SK-N-SH (cell line): ENCODE measurements at regions of chr18 and their contacts with region 1.

Region 1: DNA sequence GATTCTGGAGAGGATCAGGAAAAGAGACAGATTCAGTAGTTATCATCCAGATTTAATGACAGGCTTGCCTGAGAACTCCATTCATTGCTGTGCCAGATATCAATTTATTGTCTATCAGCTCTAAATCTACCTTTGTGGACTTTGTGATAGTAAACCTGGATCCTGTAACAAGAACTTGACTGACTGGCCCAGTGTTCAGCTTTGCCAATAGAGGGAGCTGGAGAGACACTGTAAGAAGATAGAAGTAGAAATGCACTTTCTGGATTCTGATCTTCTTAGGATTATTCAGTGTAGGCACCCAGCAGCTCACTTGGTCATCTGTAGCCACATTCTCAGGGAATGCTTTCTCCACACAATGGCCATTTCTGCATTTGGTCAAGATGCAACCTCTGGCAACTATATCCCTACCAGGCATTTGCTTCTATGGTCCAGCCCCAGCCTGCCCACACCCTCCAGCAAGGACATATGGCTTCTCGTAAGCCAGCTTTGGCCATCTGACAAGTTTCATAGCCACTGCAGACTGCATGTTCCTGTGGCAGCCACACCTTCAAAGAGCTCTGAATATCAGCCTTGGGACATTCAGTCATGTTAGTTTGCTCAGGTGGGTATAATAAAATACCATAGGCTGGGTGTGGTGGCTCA is 6.1 kb upstream of the SERPINB8 start:
- DNase-seq: peak; percentile 15
- H3K4me3 ChIP-seq: no peak overlapping the region
- H3K27ac ChIP-seq: no peak overlapping the region
- H3K4me1 ChIP-seq: no peaks in the 10 kb centered on the region
- H3K27me3 ChIP-seq: peaks cover 12% of the 10 kb centered on the region; the same call in 1 of the 2 replicates
- CTCF ChIP-seq: peak; percentile 84
- EP300 ChIP-seq: no peak
- RAD21 ChIP-seq: peak; percentile 70

Region 2: GRCh38 chr18:63949068-63949737 is 14.5 kb before region 1 on chr18 and contains the start of gene HMSD:
- CTCF ChIA-PET with region 1: interaction called, 13 read pairs
- POLR2A ChIA-PET with region 1: no interaction called
- DNase-seq: peak; percentile 56
- H3K4me3 ChIP-seq: no peak within 1 kb of the TSS
- H3K27ac ChIP-seq: no peak within 1 kb of the TSS
- H3K4me1 ChIP-seq: no peaks in the 10 kb centered on the region; a peak in 1 of 4 replicates
- H3K27me3 ChIP-seq: peaks cover 2% of the 10 kb centered on the region; the same call in 1 of the 2 replicates
- CTCF ChIP-seq: peak; percentile 17; the same call in 1 of the 2 replicates
- EP300 ChIP-seq: no peak
- RAD21 ChIP-seq: no peak
- polyA plus RNA-seq, gene HMSD: not detected in 2 replicates

Region 3: DNA sequence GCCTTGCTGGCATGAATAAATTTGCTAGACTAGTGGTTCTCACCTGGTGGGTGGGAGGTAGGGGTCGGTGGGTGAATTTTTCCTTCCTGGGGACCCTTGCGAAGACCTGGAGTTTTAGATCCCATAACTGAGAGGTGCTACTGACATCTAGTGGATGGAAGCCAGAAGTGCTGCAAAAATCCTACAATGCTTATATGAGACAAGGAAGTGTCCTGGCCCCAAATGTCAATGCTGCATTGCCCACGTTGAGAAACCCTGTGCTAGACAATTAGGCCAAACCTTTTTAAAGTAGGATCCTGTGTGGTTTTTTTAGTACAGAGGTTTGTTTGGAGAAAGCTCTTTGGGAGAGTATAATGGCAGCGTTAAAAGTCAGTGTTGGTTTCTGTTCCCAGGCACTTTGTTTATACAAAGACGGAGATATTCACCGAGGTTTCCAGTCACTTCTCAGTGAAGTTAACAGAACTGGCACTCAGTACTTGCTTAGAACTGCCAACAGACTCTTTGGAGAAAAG is 15.7 kb after region 1 on chr18:
- CTCF ChIA-PET with region 1: interaction called, 18 read pairs
- POLR2A ChIA-PET with region 1: no interaction called
- DNase-seq: peak; percentile 64
- H3K4me3 ChIP-seq: peak overlapping the region in 1 of 2 experiments; percentile 40; a peak in 3 of 4 replicates
- H3K27ac ChIP-seq: no peak overlapping the region
- H3K4me1 ChIP-seq: no peaks in the 10 kb centered on the region; a peak in 2 of 4 replicates
- H3K27me3 ChIP-seq: no peaks in the 10 kb centered on the region
- CTCF ChIP-seq: peak; percentile 97
- EP300 ChIP-seq: no peak
- RAD21 ChIP-seq: peak; percentile 75

Region 4: GRCh38 chr18:63986885-63987284 is 23.1 kb after region 1 on chr18:
- CTCF ChIA-PET with region 1: interaction called, 18 read pairs
- POLR2A ChIA-PET with region 1: no interaction called
- DNase-seq: no peak
- H3K4me3 ChIP-seq: no peak overlapping the region
- H3K27ac ChIP-seq: no peak overlapping the region
- H3K4me1 ChIP-seq: no peaks in the 10 kb centered on the region
- H3K27me3 ChIP-seq: no peaks in the 10 kb centered on the region
- CTCF ChIP-seq: no peak
- EP300 ChIP-seq: no peak
- RAD21 ChIP-seq: no peak